ENCODE measurements at regions of chr4 and their contacts with region 1.

Region 1: DNA sequence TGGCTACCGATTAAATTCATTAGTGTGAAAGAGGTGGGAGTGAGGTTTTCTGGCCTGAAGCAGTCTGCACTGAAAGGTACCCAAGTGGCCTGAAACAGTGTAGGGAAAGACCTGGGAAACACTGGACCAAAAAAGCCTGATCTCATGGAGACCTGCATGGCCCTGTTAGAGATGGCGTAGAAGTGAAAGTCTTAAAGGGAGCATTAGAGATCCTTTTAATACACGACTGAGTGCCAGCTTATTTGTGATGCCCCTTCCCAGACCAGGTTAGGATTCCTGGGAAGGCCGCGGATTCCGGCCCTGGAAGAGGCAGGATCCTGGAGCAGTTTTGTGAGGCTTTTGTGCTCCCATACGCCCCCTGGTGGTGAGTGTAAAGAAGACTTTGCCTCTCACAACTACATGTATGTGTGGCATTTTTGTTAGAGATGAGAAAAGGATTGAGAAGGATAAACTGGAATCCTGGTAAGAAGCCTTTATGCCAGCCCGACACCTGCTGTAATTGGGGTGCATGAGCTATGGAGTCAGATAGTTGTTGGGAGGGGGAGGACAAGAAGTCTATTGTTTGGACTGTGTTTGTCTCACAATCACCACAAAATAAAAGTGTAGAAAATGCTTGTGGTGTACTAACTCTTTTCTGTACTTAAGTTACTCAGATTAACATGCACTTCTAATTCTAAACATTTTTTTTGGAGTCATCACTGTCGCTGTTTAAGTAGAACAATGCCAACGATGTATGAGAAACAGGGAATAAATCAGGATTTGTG is 54.0 kb downstream of the JADE1 start:
- DNase-seq: peak; percentile 58 to 84
- H3K4me3 ChIP-seq: no peak overlapping the region
- H3K27ac ChIP-seq: peak overlapping the region in 1 of 2 donors; percentile 55
- H3K4me1 ChIP-seq: peaks cover 0 to 27% (median 15%) of the 10 kb centered on the region in 4 donors
- H3K27me3 ChIP-seq: no peaks in the 10 kb centered on the region
- CTCF ChIP-seq: peak; percentile 82 to 84

Region 2: GRCh38 chr4:128191115-128191781 is 672.2 kb before region 1 on chr4:
- intact Hi-C with region 1: loop called (anchors 10 kb)
- DNase-seq: peak; percentile 60 to 70
- H3K4me3 ChIP-seq: no peak overlapping the region
- H3K27ac ChIP-seq: no peak overlapping the region
- H3K4me1 ChIP-seq: no peaks in the 10 kb centered on the region
- H3K27me3 ChIP-seq: no peaks in the 10 kb centered on the region
- CTCF ChIP-seq: peak; percentile 82 to 83

Region 3: DNA sequence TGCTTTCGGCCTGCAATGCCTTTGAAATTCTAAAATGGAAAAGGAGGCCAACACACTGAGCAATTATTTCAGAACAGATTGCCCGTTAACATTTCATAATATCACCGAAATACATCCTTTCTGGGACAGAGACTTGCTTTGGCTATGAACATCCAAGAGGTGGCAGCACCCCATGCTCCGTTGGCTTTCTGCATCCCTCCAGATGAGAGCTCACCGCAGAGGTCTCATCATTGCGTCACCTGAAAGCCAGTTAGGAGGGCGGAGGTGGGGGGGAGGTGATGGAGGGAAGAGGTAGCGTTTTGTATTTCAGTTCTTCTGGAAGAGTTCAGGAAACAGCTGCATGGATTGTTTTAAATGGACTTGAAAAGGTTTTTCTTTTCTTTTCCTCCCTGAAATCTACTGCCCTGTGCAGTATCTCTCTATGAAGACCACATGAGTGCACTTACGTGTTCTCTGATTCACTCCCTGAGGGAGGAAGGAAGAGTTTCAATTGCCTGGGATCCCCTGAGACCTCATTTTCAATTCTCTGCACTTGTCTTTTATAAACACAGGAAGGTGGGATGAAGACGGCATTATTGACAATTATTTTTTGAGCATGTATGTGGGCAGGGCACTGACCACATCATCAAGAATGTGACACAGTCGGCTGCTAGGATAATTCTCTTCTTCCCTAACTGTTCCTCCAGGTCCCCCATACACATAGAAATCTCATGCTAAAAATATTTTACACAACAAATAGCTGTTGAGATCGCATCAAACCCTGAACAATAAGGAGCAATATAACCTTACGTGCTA is 409.0 kb before region 1 on chr4:
- intact Hi-C with region 1: loop called (anchors 5 kb)
- DNase-seq: peak; percentile 87 to 92
- H3K4me3 ChIP-seq: no peak overlapping the region
- H3K27ac ChIP-seq: no peak overlapping the region
- H3K4me1 ChIP-seq: peaks cover 0 to 6% (median 3%) of the 10 kb centered on the region in 4 donors
- H3K27me3 ChIP-seq: no peaks in the 10 kb centered on the region
- CTCF ChIP-seq: peak; percentile 82 to 83

Region 4: DNA sequence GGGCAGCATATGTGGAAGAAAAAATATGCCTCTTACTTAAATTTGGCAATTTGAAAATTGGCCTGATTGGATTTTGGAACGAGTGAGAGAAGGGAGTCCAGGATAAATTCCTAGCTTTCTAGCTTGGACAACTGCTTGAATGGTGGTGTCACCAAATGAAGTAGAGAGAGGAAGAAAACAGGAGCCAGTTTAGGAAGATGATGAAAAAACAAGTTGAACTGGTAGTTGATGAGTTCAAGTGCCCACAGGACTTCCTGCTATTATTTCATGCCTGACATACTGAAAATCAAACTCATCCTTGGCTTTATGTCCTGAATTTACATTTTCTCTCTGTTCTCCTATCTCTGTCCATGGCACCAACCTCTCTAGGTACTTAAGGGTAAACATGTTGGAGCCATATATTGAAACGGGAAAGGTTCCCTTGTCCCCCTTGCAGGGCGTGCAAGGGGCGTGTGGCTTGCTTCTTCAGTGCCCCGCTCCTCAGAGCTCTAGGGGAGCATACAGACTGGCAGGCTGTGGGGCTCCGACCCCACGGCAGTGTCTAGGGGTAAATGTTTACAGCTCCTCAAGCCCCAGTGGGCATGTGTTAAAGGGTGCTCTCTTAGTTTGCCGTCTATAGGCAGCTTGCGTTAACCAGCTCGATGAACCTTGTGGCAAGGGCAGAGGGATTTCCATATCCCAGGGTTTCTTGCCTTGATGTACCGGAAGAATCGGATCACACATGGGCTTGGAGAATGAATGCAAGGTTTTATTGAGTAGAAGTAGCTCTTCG is 325.2 kb before region 1 on chr4:
- intact Hi-C with region 1: no loop called
- DNase-seq: no peak
- H3K4me3 ChIP-seq: no peak overlapping the region
- H3K27ac ChIP-seq: no peak overlapping the region
- H3K4me1 ChIP-seq: peaks cover 0 to 6% (median 0%) of the 10 kb centered on the region in 4 donors
- H3K27me3 ChIP-seq: no peaks in the 10 kb centered on the region
- CTCF ChIP-seq: no peak

Region 5: DNA sequence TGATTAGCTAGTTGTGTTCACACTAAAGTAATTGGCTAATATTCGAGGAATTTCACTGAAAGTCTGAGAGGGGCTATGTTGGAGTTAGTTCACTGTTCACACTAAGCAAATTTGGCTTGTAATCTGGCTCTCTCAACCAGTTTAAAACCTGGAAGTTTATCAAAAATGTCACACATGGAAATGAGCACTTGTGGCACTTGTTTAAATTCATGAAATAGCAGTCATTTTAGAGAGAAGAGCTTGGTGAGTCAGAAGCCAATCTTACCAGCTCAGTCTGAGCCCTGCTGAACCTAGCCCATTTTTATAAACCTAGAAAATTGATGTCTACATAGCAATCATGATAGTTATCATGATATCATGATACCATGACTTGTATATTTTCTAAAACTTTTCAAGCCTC is 144.7 kb before region 1 on chr4:
- intact Hi-C with region 1: no loop called
- DNase-seq: no peak
- H3K4me3 ChIP-seq: no peak overlapping the region
- H3K27ac ChIP-seq: no peak overlapping the region
- H3K4me1 ChIP-seq: peaks cover 0 to 24% (median 8%) of the 10 kb centered on the region in 4 donors
- H3K27me3 ChIP-seq: no peaks in the 10 kb centered on the region
- CTCF ChIP-seq: no peak

Region 6: DNA sequence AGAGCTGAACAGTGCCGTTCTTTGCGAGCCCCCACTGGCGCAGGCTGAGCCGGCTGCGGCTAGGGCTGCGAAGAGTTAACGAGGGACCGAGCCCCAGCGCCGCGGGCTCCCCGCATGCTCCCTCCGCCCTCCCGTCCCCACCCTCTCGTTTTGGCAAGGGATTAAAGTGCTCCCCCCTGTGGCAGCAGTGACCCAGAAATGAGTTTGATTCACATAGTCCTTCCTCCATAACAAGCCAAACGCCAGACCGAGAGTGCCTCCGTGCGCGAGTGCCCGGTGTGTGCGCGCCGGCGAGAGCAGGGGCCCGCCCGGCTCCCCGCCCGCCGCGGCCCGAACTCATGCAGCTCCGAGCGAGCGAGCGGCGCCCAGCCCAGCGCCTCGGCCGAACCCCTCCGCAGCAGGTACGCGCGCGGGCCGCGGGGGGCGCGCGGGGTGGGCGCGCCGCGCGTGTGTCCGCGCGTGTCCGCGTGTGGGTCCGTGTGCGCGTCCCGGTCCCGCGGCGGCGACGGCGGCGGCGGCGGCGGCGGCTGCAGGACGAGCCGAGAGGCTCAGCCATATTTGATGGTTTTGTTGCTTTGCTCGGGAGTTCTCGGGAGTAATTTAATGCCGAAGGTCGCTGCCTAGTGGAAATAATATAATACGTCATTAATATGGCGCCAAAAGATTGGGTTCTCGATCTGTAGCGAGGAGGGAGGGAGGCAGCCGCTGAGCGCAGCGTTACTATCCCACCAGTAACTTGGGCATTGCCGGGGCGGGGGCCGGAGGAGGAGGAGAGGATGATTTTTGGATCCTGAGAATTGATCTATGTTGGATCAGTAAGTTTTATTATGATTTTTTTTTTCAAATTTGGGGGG is 53.8 kb before region 1 on chr4 and contains the start of gene JADE1:
- intact Hi-C with region 1: loop called (anchors 10 kb)
- DNase-seq: peak; percentile 95
- H3K4me3 ChIP-seq: peak within 1 kb of the TSS; percentile 73 to 95
- H3K27ac ChIP-seq: peak within 1 kb of the TSS; percentile 88 to 92
- H3K4me1 ChIP-seq: peaks cover 0 to 11% (median 4%) of the 10 kb centered on the region in 4 donors
- H3K27me3 ChIP-seq: no peaks in the 10 kb centered on the region
- CTCF ChIP-seq: peak; percentile 46 to 63

Measured in tibial artery (tissue), 4 donors.